GM12878 (cell line): ENCODE measurements at regions of chr6 and their contacts with region 1.

Region 1: GRCh38 chr6:72616406-72617015 is 5.4 kb upstream of the KCNQ5 start:
- DNase-seq: no peak
- ATAC-seq: no peak
- H3K4me3 ChIP-seq: no peak overlapping the region
- H3K27ac ChIP-seq: no peak overlapping the region
- H3K4me1 ChIP-seq: peaks cover 13% of the 10 kb centered on the region
- H3K27me3 ChIP-seq: no peaks in the 10 kb centered on the region
- CTCF ChIP-seq: peak; percentile 57 to 70 (median 60); a peak in 5 of 6 replicates
- EP300 ChIP-seq: no peak
- POLR2A ChIP-seq: no peak
- RAD21 ChIP-seq: peak; percentile 81

Region 2: GRCh38 chr6:72589096-72589495 is 27.4 kb before region 1 on chr6:
- CTCF ChIA-PET with region 1: interaction called, 14 read pairs
- POLR2A ChIA-PET with region 1: no interaction called
- RAD21 ChIA-PET with region 1: interaction called, 5 read pairs
- SMC1A ChIA-PET with region 1: interaction called, 3 read pairs
- in situ Hi-C with region 1: no loop called
- intact Hi-C with region 1: no loop called
- DNase-seq: no peak
- ATAC-seq: no peak
- H3K4me3 ChIP-seq: no peak overlapping the region
- H3K27ac ChIP-seq: no peak overlapping the region
- H3K4me1 ChIP-seq: no peaks in the 10 kb centered on the region
- H3K27me3 ChIP-seq: no peaks in the 10 kb centered on the region
- CTCF ChIP-seq: no peak
- EP300 ChIP-seq: no peak
- POLR2A ChIP-seq: no peak
- RAD21 ChIP-seq: no peak

Region 3: GRCh38 chr6:72689107-72689954 is 72.8 kb after region 1 on chr6:
- CTCF ChIA-PET with region 1: interaction called, 40 read pairs
- POLR2A ChIA-PET with region 1: interaction called, 41 read pairs
- RAD21 ChIA-PET with region 1: interaction called, 149 read pairs
- SMC1A ChIA-PET with region 1: interaction called, 245 read pairs
- in situ Hi-C with region 1: no loop called
- intact Hi-C with region 1: no loop called
- DNase-seq: peak; percentile 96
- ATAC-seq: peak; percentile 94
- H3K4me3 ChIP-seq: peak overlapping the region; percentile 63
- H3K27ac ChIP-seq: peak overlapping the region; percentile 100
- H3K4me1 ChIP-seq: peaks cover 16% of the 10 kb centered on the region
- H3K27me3 ChIP-seq: no peaks in the 10 kb centered on the region
- CTCF ChIP-seq: no peak
- EP300 ChIP-seq: peak; percentile 89 to 93; a peak in 3 of 4 replicates
- POLR2A ChIP-seq: no peak; the same call in 1 of the 2 replicates
- RAD21 ChIP-seq: peak; percentile 38

Region 4: GRCh38 chr6:73073238-73073637 is 456.7 kb after region 1 on chr6:
- CTCF ChIA-PET with region 1: interaction called, 4 read pairs
- POLR2A ChIA-PET with region 1: no interaction called
- RAD21 ChIA-PET with region 1: interaction called, 3 read pairs
- SMC1A ChIA-PET with region 1: interaction called, 11 read pairs
- in situ Hi-C with region 1: no loop called
- intact Hi-C with region 1: no loop called
- DNase-seq: no peak
- ATAC-seq: no peak
- H3K4me3 ChIP-seq: no peak overlapping the region
- H3K27ac ChIP-seq: no peak overlapping the region
- H3K4me1 ChIP-seq: no peaks in the 10 kb centered on the region
- H3K27me3 ChIP-seq: no peaks in the 10 kb centered on the region
- CTCF ChIP-seq: no peak
- EP300 ChIP-seq: no peak
- POLR2A ChIP-seq: no peak
- RAD21 ChIP-seq: no peak

Region 5: DNA sequence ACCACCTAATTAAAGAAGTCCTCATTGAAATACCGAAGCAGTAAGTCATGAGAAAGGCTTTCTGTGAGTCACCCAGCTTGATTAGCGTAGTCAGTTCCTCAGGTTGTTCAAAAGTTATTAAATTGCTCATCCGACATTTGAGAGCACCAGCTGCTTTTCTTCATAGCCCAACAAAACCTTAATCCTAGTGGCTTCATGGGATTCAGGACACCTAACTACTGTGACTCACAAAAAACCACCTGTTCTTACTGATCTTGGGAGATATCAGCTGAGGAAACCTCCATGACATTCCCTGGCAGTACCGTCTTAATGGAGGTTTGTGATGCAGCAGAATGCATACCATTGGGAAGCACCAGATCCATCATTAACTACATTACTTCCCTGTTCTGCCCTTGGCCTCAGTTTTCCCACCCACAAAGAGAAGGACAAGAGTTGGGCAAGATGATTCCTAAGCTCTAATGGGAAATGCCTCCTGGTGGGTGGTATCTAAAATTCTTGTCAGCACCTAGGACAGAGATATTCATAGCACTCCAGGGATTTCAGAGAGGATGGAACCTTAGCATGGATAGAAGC is 505.0 kb after region 1 on chr6:
- CTCF ChIA-PET with region 1: interaction called, 644 read pairs
- POLR2A ChIA-PET with region 1: interaction called, 3 read pairs
- RAD21 ChIA-PET with region 1: interaction called, 436 read pairs
- SMC1A ChIA-PET with region 1: interaction called, 446 read pairs
- in situ Hi-C with region 1: no loop called
- intact Hi-C with region 1: no loop called
- DNase-seq: no peak
- ATAC-seq: no peak
- H3K4me3 ChIP-seq: no peak overlapping the region
- H3K27ac ChIP-seq: no peak overlapping the region
- H3K4me1 ChIP-seq: peaks cover 7% of the 10 kb centered on the region; the same call in 1 of the 2 replicates
- H3K27me3 ChIP-seq: no peaks in the 10 kb centered on the region
- CTCF ChIP-seq: no peak
- EP300 ChIP-seq: no peak
- POLR2A ChIP-seq: no peak
- RAD21 ChIP-seq: no peak

Region 6: GRCh38 chr6:73180763-73181619 is 564.5 kb after region 1 on chr6:
- CTCF ChIA-PET with region 1: interaction called, 25 read pairs
- POLR2A ChIA-PET with region 1: no interaction called
- RAD21 ChIA-PET with region 1: interaction called, 29 read pairs
- SMC1A ChIA-PET with region 1: interaction called, 27 read pairs
- in situ Hi-C with region 1: loop called (anchors 5 kb)
- intact Hi-C with region 1: loop called (anchors 2 kb)
- DNase-seq: peak; percentile 53
- ATAC-seq: peak; percentile 94
- H3K4me3 ChIP-seq: peak overlapping the region; percentile 25; the same call in 1 of the 2 replicates
- H3K27ac ChIP-seq: no peak overlapping the region
- H3K4me1 ChIP-seq: peaks cover 23% of the 10 kb centered on the region
- H3K27me3 ChIP-seq: no peaks in the 10 kb centered on the region
- CTCF ChIP-seq: peak; percentile 79 to 91 (median 85)
- EP300 ChIP-seq: no peak
- POLR2A ChIP-seq: no peak
- RAD21 ChIP-seq: peak; percentile 97